A549 (cell line): ENCODE measurements at regions of chr15 and their contacts with region 1.

Region 1: DNA sequence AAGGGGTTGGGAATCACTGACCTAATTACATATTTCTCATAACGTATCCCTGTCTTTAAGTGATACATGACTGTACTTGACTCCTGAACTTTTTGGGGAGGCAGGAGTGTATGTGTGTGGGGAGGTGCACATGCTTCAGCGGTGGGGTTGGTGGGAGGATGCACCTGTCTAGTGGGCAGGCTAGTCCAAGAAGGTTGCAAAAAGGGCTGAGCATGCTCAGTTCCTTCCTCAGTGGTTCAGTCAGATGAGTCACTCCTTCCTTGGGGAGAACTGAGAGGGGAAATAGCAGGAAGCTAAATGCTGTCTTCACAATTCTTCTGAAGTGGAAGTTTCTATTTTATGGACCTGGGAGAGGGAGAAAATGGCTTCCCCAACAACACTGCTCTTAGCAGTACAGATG is 24.6 kb upstream of the AP4E1 start:
- DNase-seq: peak in 1 of 2 experiments; percentile 52
- ATAC-seq: 0 out of 6 replicates have a peak, but pooled peaks of 1 of the 2 experiments have one; percentile 12
- H3K4me3 ChIP-seq: no peak overlapping the region
- H3K27ac ChIP-seq: peak overlapping the region; percentile 87 to 89
- H3K4me1 ChIP-seq: peaks cover 54% of the 10 kb centered on the region
- CTCF ChIP-seq: no peak
- EP300 ChIP-seq: no peak
- POLR2A ChIP-seq: no peak
- RAD21 ChIP-seq: no peak

Region 2: DNA sequence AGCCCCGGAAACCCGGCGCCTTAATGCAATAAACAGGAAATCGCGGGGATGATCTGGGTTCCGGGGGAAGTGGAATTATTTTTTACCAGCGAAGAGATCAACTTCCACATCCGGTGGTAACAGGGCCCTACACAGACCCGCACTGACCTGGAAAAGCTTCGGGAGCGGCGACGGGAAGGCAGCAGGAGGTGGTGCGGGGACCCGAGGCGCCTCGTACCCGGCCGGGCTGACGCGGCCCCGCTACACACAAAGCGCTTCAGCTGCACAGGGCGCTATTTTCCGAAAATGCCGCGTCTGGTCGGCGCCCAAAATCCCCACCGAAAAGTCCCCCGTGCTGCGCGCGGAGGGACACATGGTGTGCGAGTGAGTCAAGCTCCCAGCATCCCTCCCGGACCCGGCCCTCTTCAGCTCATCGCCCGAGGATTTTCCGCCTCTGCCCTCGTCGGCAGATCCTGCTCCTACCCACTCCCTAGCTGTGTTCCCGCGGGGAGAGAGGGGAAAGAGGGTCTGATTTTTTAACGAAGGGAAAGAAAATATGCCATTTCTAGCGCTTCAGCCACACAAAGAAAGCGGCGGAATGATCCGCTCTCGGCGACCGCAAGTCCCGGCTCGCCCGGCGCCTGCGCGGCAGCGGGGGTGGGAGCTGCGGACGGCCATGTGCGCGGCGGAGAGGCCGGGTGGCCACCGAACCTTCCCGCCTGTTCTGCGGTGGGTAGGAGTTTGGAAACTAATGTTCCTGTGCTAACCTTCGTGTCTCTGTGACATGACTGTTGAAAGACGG is 528.9 kb before region 1 on chr15 and contains the start of gene GABPB1:
- CTCF ChIA-PET with region 1: interaction called, 4 read pairs
- POLR2A ChIA-PET with region 1: interaction called, 21 read pairs
- DNase-seq: peak; percentile 83 to 98
- ATAC-seq: peak; percentile 75 to 86
- H3K4me3 ChIP-seq: peak within 1 kb of the TSS; percentile 91
- H3K27ac ChIP-seq: peak within 1 kb of the TSS; percentile 96 to 98
- H3K4me1 ChIP-seq: peaks cover 27% of the 10 kb centered on the region
- CTCF ChIP-seq: no peak
- EP300 ChIP-seq: no peak
- POLR2A ChIP-seq: peak; percentile 97
- RAD21 ChIP-seq: no peak
- polyA plus RNA-seq, gene GABPB1: 53.9 and 55.1 TPM in 2 replicates

Region 3: DNA sequence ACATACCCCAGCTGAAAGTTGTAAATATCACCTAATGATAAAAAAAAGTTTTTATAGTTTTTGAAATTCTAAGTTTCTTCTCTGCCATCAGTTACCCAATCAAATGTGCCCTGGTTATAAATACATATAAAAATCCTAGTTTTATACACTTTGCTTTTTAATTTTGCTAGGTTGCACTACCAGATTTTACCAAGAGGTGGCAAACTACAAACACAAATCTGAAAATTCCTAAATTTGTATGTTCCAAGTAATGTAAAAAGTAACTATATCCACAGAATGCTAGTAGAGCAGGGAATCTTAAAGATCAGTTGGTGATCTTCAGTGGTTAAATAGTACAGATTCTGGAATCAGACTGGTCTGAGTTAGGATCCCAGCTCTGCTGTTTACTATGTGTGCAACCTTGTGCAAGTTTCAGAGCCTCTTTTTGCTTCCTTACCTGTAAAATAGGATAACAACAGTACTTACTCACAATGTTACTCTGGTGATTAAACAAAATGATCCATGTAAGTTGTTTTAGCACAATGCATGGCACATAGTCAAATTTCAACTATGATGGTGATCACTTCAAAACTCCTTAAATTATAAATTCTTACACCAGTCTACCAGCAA is 208.3 kb before region 1 on chr15:
- CTCF ChIA-PET with region 1: interaction called, 73 read pairs
- POLR2A ChIA-PET with region 1: interaction called, 7 read pairs
- DNase-seq: peak; percentile 25 to 52
- ATAC-seq: no peak; a peak in 1 of 6 replicates
- H3K4me3 ChIP-seq: no peak overlapping the region
- H3K27ac ChIP-seq: peak overlapping the region in 1 of 2 experiments; percentile 23; a peak in 1 of 6 replicates
- H3K4me1 ChIP-seq: peaks cover 24% of the 10 kb centered on the region
- CTCF ChIP-seq: peak; percentile 88
- EP300 ChIP-seq: no peak
- POLR2A ChIP-seq: no peak
- RAD21 ChIP-seq: peak; percentile 76 to 87

Region 4: DNA sequence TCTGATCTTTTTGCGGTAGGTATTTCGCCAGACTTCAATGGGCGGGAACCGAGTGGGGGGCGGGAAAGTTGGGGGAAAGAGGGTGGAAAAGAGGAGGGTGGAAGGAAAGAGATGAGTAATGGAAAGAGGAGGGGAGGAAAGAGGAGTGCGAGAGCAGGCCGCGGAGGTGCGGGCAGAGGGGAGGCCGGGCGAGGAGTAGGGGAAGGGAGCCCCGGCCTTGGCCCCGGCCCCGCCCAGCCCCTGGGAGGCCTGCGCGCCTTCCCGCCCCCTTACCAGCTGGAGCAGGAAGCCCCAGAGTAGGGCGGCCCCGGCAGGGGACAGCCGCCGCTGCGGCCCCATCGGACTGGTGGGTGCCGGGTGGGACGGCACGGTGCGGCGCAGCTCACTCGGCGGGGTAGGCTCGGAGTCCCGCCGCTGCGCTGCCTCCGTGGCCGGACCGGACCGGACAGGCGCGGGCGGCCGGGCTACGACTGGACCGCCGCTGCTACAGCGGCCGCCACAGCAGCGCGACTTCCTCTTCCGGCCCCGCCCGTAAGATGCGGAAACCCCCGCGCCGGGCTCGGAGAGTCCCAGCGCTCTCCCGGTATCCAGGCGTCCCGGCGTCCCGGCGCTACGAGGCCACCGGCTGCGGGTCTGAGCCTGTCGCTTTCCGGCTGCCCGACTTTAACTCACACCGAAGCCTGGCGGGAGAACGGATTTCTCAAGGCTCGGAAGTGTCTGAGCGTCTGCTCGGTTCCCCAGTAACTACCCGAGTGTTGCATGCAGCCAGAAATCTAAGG is 118.5 kb before region 1 on chr15 and contains the start of gene SPPL2A:
- CTCF ChIA-PET with region 1: interaction called, 13 read pairs
- POLR2A ChIA-PET with region 1: interaction called, 5 read pairs
- DNase-seq: peak; percentile 93 to 95
- ATAC-seq: peak; percentile 97 to 98
- H3K4me3 ChIP-seq: peak within 1 kb of the TSS; percentile 59
- H3K27ac ChIP-seq: peak within 1 kb of the TSS; percentile 92 to 95
- H3K4me1 ChIP-seq: peaks cover 28% of the 10 kb centered on the region
- CTCF ChIP-seq: no peak
- EP300 ChIP-seq: no peak
- POLR2A ChIP-seq: peak; percentile 96
- RAD21 ChIP-seq: peak in 1 of 2 experiments; percentile 23; a peak in 2 of 5 replicates
- polyA plus RNA-seq, gene SPPL2A: 138 and 163 TPM in 2 replicates

Region 5: DNA sequence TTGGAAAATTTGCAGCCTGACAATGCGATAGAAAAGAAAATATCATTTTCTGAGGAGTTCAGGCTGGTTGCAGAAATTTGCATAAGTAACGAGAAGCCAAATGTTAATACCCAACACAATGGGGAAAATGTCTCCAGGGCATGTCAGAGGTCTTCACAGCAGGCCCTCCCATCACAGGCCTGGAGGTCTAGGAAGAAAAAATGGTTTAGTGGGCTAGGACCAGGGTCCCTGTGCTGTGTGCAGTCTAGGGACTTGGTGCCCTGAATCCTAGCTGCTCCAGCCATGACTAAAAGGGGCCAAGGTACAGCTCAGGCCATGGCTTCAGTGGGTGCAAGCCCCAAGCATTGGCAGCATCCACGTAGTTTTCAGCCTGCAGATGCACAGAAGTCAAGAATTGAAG is 10.1 kb after region 1 on chr15:
- CTCF ChIA-PET with region 1: interaction called, 27 read pairs
- POLR2A ChIA-PET with region 1: no interaction called
- DNase-seq: no peak
- ATAC-seq: no peak
- H3K4me3 ChIP-seq: no peak overlapping the region
- H3K27ac ChIP-seq: no peak overlapping the region
- H3K4me1 ChIP-seq: no peaks in the 10 kb centered on the region
- CTCF ChIP-seq: no peak
- EP300 ChIP-seq: no peak
- POLR2A ChIP-seq: no peak
- RAD21 ChIP-seq: no peak

Region 6: DNA sequence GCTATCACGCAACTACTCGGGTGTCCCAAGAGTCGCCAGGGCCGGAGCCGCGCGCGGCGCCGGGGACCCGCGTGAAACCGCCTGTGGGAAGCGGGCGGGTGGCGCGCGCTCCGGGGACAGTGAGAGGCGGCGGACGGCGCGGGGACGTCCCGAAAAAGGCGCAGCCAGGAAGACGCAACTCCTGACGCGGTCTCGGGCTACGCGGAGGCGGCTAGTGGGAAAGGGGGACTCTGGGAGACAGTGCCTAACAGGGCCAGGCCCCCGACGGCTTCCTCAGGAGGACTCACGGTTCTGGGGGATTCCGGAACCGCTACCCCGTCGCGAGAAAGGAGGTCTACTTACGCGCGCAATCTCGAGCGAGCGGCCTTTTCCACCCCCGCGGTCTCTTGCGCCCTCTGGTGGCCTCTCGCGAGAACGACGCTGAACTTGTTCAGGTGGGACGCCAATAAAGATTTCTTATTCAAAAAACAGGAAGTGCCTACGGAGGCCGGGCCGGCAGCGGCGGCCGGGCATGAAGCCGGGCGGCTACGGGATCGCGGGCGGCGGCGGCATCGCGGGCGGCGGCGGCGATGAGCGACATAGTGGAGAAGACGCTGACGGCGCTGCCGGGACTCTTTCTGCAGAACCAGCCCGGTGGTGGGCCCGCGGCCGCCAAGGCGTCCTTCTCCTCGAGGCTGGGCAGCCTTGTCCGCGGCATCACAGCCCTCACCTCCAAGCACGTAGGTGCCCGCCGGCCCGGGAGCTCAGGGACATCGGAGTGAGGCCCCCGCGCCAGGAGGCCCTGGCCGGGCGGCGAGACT is 24.5 kb after region 1 on chr15 and contains the start of gene AP4E1:
- CTCF ChIA-PET with region 1: interaction called, 23 read pairs
- POLR2A ChIA-PET with region 1: interaction called, 10 read pairs
- DNase-seq: peak; percentile 75 to 96
- ATAC-seq: peak; percentile 88 to 90
- H3K4me3 ChIP-seq: peak within 1 kb of the TSS; percentile 81
- H3K27ac ChIP-seq: peak within 1 kb of the TSS; percentile 88 to 97
- H3K4me1 ChIP-seq: peaks cover 24% of the 10 kb centered on the region
- CTCF ChIP-seq: peak; percentile 98
- EP300 ChIP-seq: no peak
- POLR2A ChIP-seq: peak; percentile 24
- RAD21 ChIP-seq: peak; percentile 98 to 99
- polyA plus RNA-seq, gene AP4E1: 9.5 and 9.6 TPM in 2 replicates

Region 7: DNA sequence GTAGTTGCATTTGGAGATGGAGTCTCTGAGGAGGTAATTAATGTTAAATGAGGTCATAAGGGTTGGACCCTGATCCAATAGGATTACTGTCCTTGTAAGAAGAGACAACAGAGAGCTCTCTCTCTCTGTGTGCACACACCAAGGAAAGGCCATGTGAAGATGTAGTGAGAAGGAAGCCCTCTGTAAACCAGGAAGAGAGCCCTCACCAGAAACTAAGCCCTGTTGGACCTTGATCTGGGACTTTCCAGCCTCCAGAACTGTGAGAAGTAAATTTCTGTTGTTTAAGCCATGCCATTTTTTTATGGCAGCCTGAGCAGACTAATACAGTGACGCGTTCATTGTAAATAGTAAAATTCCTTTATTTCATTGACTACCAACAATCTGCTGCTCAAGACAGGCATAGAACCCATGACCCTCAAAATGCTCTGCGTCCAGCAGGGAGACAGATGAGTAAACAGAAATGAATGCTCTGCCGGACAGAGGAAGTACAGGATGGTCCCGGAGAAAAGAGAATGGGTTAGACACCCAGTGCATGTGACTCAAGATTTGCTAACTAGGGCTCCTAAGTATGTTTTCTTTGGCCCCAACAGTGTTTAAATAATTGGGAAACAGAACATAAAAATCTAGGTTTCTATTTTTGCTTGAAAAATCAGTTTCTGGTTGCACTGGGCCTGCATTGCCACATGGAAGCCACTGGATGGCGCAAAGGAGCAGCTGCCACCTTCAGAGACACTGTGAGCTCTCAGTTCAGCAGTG is 248.7 kb after region 1 on chr15:
- CTCF ChIA-PET with region 1: no interaction called
- POLR2A ChIA-PET with region 1: no interaction called
- DNase-seq: peak; percentile 55 to 69
- ATAC-seq: peak; percentile 74 to 89
- H3K4me3 ChIP-seq: no peak overlapping the region
- H3K27ac ChIP-seq: peak overlapping the region; percentile 54 to 57
- H3K4me1 ChIP-seq: peaks cover 13% of the 10 kb centered on the region
- CTCF ChIP-seq: peak; percentile 86
- EP300 ChIP-seq: no peak
- POLR2A ChIP-seq: no peak
- RAD21 ChIP-seq: peak; percentile 68 to 69